IMR-90 (cell line): ENCODE measurements at regions of chr15 and their contacts with region 1.

Region 1: DNA sequence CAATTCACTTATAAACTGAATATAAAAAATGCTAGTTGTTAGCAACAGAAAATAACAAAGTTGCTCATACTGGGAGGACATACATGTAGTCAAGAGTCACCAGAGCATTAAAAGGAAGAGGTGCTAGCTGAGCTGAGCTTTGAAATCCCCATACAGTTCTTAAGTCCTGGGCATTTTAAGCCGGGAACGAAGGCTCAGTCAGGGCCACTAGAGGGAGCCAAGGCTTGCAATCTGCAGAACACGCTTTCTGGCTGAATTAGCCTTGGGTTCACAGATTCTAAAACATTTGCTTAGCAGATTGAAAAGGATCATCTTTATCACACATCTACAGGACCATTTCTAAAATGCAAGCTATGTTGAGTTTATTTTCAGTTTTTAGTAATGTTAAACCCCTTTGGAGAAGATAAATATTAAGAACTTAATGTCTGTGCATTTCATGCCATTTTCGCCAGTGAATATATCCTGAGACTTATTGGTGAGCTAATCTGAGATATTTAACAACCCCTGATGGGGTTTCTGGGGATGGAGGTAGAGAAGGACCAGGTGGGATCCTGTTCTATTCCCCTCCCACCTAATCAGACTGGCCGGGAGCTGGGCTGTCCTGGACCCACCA is 26.3 kb upstream of the MNS1 start:
- DNase-seq: peak; percentile 81
- ATAC-seq: peak; percentile 94
- H3K4me3 ChIP-seq: no peak overlapping the region
- H3K27ac ChIP-seq: no peak overlapping the region
- H3K4me1 ChIP-seq: no peaks in the 10 kb centered on the region
- H3K27me3 ChIP-seq: peaks cover 33% of the 10 kb centered on the region
- CTCF ChIP-seq: peak; percentile 88
- POLR2A ChIP-seq: no peak
- RAD21 ChIP-seq: peak; percentile 92

Region 2: GRCh38 chr15:56772868-56773639 is 281.8 kb after region 1 on chr15:
- CTCF ChIA-PET with region 1: no interaction called
- POLR2A ChIA-PET with region 1: no interaction called
- dilution Hi-C with region 1: no loop called
- in situ Hi-C with region 1: no loop called
- intact Hi-C with region 1: loop called (anchors 2 kb)
- DNase-seq: peak; percentile 74
- ATAC-seq: peak; percentile 84
- H3K4me3 ChIP-seq: no peak overlapping the region
- H3K27ac ChIP-seq: peak overlapping the region; percentile 15; the same call in 1 of the 2 replicates
- H3K4me1 ChIP-seq: peaks cover 4% of the 10 kb centered on the region
- H3K27me3 ChIP-seq: no peaks in the 10 kb centered on the region
- CTCF ChIP-seq: no peak
- POLR2A ChIP-seq: no peak
- RAD21 ChIP-seq: no peak

Region 3: DNA sequence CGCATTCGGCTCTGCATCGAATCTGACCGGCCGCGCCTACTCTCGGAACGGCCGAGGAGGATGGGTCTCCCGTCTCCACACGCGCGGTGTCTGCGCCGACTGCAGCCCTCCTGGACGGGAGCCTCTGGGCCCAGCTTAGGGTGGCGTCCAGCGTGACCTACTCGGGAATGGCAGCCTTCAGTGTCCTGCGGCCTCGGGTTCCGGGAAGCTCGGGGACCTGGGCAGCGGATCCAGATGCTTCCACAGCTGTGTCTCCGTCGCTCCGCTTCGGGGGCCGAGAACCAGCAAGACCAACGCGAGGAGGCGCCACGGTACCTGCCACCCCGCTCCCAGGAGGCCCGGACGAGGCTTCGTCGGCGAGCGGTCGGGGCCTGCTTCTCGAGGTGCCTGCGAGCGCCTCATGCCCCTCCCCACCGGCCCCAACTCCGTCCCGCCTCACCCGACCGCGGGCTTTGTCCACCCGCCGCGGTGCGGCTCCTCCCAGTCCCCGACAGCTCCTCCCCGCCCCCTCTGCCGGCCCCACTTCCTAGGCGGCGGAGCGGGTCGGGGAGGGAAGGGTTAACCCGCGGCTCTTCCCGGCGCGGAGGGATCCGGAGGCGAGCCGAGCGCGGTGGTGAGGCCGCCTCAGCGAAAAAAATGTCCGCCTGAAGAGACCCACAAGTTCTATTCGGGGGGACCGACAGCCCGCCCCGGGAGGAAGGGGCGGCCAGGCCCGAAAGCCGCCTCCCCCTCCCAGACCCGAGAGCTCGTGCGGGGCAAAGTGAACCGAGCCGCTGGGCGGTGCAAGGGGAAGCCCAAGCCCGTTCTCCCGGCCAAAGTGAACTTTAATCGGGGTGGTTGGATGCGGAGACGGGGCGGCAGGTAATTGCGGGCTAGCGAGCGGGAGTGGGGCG is 427.1 kb after region 1 on chr15 and contains the start of gene TCF12:
- CTCF ChIA-PET with region 1: interaction called, 3 read pairs
- POLR2A ChIA-PET with region 1: no interaction called
- dilution Hi-C with region 1: no loop called
- in situ Hi-C with region 1: no loop called
- intact Hi-C with region 1: loop called (anchors 2 kb)
- DNase-seq: peak; percentile 95
- ATAC-seq: peak; percentile 96
- H3K4me3 ChIP-seq: peak within 1 kb of the TSS; percentile 97
- H3K27ac ChIP-seq: peak within 1 kb of the TSS; percentile 98
- H3K4me1 ChIP-seq: 0 out of 2 replicates have a peak, but pooled peaks cover 5% of the 10 kb centered on the region
- H3K27me3 ChIP-seq: no peaks in the 10 kb centered on the region
- CTCF ChIP-seq: peak; percentile 44
- POLR2A ChIP-seq: peak; percentile 63
- RAD21 ChIP-seq: peak; percentile 38; the same call in 1 of the 2 replicates
- total RNA-seq, gene TCF12: 123 and 160 TPM in 2 replicates

Region 4: GRCh38 chr15:57146506-57147201 is 655.4 kb after region 1 on chr15:
- CTCF ChIA-PET with region 1: interaction called, 3 read pairs
- POLR2A ChIA-PET with region 1: no interaction called
- dilution Hi-C with region 1: loop called (anchors 25 kb)
- in situ Hi-C with region 1: no loop called
- intact Hi-C with region 1: loop called (anchors 5 kb)
- DNase-seq: peak; percentile 73
- ATAC-seq: peak; percentile 52
- H3K4me3 ChIP-seq: peak overlapping the region; percentile 20; the same call in 1 of the 2 replicates
- H3K27ac ChIP-seq: no peak overlapping the region; the same call in 1 of the 2 replicates
- H3K4me1 ChIP-seq: peaks cover 25% of the 10 kb centered on the region
- H3K27me3 ChIP-seq: no peaks in the 10 kb centered on the region
- CTCF ChIP-seq: peak; percentile 88
- POLR2A ChIP-seq: no peak
- RAD21 ChIP-seq: peak; percentile 83

Region 5: GRCh38 chr15:57259568-57260040 is 768.4 kb after region 1 on chr15:
- CTCF ChIA-PET with region 1: no interaction called
- POLR2A ChIA-PET with region 1: no interaction called
- dilution Hi-C with region 1: loop called (anchors 25 kb)
- in situ Hi-C with region 1: no loop called
- intact Hi-C with region 1: no loop called
- DNase-seq: no peak
- ATAC-seq: peak; percentile 17; the same call in 1 of the 2 replicates
- H3K4me3 ChIP-seq: no peak overlapping the region
- H3K27ac ChIP-seq: peak overlapping the region; percentile 32; the same call in 1 of the 2 replicates
- H3K4me1 ChIP-seq: peaks cover 3% of the 10 kb centered on the region
- H3K27me3 ChIP-seq: no peaks in the 10 kb centered on the region
- CTCF ChIP-seq: no peak
- POLR2A ChIP-seq: no peak
- RAD21 ChIP-seq: no peak

Region 6: GRCh38 chr15:57527382-57528091 is 1036.3 kb after region 1 on chr15:
- CTCF ChIA-PET with region 1: interaction called, 4 read pairs
- POLR2A ChIA-PET with region 1: no interaction called
- dilution Hi-C with region 1: no loop called
- in situ Hi-C with region 1: loop called (anchors 10 kb)
- intact Hi-C with region 1: loop called (anchors 1 kb)
- DNase-seq: peak; percentile 88
- ATAC-seq: peak; percentile 83
- H3K4me3 ChIP-seq: no peak overlapping the region
- H3K27ac ChIP-seq: no peak overlapping the region
- H3K4me1 ChIP-seq: no peaks in the 10 kb centered on the region
- H3K27me3 ChIP-seq: peaks cover 39% of the 10 kb centered on the region
- CTCF ChIP-seq: peak; percentile 78
- POLR2A ChIP-seq: no peak
- RAD21 ChIP-seq: peak; percentile 92